Mammary epithelial cell (primary cell): ENCODE measurements at regions of chr12 and their contacts with region 1.

Region 1: DNA sequence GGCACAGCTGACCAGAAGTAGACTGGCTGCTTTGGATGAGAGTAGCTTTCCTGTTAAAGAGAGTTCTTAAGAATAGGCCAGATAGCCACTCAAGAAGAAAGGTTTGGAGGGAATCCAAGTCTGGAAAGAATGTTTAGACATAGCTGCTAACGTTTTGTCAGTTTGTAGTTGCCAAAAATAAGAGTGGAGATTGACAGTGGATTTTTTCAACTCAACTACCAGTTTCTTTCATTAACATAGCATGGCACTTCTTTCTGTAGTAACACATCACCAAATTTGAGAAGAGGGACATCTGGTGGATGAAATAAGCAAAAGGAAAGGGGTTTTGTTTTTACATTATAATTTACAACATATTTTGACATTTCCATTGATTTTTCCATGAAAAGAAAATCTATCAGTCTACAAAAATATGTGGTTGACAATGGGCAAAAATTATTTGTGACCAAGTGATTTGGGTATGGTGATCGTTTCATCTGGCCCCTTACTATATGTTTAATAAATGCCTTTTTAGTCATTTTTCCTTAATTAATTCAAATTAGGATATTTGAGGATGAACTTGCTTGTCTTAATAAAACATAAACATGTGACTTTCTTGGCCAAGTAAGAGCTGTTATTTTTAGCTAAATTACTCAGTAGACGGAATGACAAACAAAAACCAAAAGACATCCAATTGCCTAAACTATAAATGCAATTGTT is 71.1 kb downstream of the PTPRR start:
- DNase-seq: peak; percentile 8
- H3K4me3 ChIP-seq: no peak overlapping the region
- H3K27ac ChIP-seq: no peak overlapping the region
- H3K4me1 ChIP-seq: no peaks in the 10 kb centered on the region
- H3K27me3 ChIP-seq: peaks cover 2% of the 10 kb centered on the region
- CTCF ChIP-seq: peak; percentile 25 to 62

Region 2: DNA sequence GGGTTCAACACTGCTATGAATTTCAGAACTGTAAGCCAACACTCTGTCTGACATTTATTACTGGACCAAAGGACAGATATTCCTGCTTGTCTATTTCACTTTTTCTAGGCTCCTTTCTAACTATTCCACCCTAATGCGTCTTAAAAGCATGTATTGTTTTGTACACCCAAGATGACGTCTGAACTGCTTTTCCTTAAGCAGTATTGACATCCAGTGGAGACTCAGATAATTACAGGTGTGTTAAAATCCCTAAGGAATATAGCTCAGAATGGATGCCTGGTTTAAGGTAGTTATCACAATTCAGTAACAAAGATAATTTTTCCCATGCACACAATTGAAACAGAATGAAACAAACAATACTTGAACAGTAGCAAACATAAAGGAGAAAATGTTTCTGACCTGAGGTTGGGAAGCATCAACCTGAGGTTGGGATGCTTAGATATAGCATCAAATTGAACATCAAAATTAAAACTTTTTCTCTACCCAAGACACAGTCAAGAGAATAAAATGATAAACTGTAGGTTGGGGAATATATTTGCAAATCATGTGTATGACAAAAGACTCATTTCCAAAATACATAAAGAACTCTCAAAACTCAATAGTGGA is 164.9 kb after region 1 on chr12:
- CTCF ChIA-PET with region 1: no interaction called
- dilution Hi-C with region 1: no loop called
- in situ Hi-C with region 1: no loop called
- intact Hi-C with region 1: loop called (anchors 5 kb)
- DNase-seq: peak; percentile 32
- H3K4me3 ChIP-seq: no peak overlapping the region
- H3K27ac ChIP-seq: no peak overlapping the region
- H3K4me1 ChIP-seq: no peaks in the 10 kb centered on the region
- H3K27me3 ChIP-seq: no peaks in the 10 kb centered on the region
- CTCF ChIP-seq: peak; percentile 46 to 65